ENCODE measurements at regions of chr11 and their contacts with region 1.

Region 1: GRCh38 chr11:45348729-45349128 is 62.6 kb upstream of the SYT13 start:
- DNase-seq: no peak
- ATAC-seq: no peak
- H3K4me3 ChIP-seq: no peak overlapping the region
- H3K27ac ChIP-seq: no peak overlapping the region
- H3K4me1 ChIP-seq: no peaks in the 10 kb centered on the region
- H3K27me3 ChIP-seq: peaks cover 54% of the 10 kb centered on the region
- CTCF ChIP-seq: no peak

Region 2: DNA sequence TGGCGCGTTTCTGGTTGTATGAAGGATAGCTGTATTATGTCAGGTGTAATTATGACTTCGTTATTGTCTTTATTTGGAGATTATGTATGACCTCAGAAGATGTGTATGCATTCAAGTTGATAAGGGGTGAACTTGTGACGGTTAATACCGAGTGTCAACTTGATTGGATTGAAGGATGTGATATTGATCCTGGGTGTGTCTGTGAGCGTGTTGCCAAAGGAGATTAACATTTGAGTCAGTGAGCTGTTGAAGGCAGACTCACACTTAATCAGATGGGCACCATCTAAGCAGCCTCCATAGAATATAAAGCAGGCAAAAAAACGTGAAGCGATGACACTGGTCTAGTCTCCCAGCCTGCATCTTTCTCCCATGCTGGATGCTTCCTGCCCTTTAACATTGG is 798.6 kb before region 1 on chr11:
- CTCF ChIA-PET with region 1: no interaction called
- POLR2A ChIA-PET with region 1: no interaction called
- intact Hi-C with region 1: no loop called
- DNase-seq: no peak
- ATAC-seq: no peak
- H3K4me3 ChIP-seq: no peak overlapping the region
- H3K27ac ChIP-seq: no peak overlapping the region
- H3K4me1 ChIP-seq: no peaks in the 10 kb centered on the region
- H3K27me3 ChIP-seq: no peaks in the 10 kb centered on the region
- CTCF ChIP-seq: no peak

Region 3: DNA sequence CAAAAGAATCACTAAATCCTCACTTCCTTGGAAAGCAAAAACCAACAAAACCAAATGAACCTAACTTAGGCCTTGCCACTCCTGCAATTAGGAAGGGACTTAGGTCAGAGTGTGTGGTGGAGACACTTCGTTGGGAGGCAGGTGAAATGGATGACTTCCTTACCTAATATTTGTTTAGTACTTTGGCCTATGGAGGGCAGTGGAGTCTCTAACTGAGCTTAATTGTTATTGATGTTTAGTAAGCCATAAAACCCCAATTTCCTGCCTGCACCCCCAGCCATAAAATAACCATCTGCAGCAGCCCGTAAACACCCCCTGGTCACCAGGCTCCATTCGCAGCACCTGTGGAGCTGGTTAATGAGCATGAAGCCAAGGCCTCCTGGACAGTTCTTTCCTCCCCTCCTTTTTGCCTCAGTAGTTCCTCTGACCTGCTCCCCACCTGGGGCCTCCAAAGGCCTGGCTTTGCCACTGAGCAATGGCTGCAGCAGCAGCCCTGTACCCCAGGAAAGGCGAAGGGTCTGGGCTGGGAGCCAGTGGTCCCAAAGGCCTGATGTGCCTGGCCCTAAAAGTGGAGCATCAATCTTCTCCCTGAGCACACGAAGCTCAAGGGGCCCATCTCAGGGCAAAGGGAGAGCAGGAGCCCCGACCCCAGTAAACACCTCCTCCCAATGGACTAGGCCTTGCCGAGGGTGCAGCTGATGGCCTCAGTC is 47.0 kb before region 1 on chr11:
- CTCF ChIA-PET with region 1: no interaction called
- POLR2A ChIA-PET with region 1: no interaction called
- intact Hi-C with region 1: no loop called
- DNase-seq: no peak
- ATAC-seq: no peak
- H3K4me3 ChIP-seq: no peak overlapping the region
- H3K27ac ChIP-seq: no peak overlapping the region
- H3K4me1 ChIP-seq: no peaks in the 10 kb centered on the region
- H3K27me3 ChIP-seq: peaks cover 45% of the 10 kb centered on the region
- CTCF ChIP-seq: no peak

Region 4: GRCh38 chr11:45655347-45655756 is 306.6 kb after region 1 on chr11:
- CTCF ChIA-PET with region 1: interaction called, 11 read pairs
- POLR2A ChIA-PET with region 1: no interaction called
- intact Hi-C with region 1: no loop called
- DNase-seq: peak; percentile 73
- ATAC-seq: peak; percentile 88
- H3K4me3 ChIP-seq: no peak overlapping the region
- H3K27ac ChIP-seq: no peak overlapping the region
- H3K4me1 ChIP-seq: no peaks in the 10 kb centered on the region
- H3K27me3 ChIP-seq: peaks cover 12% of the 10 kb centered on the region
- CTCF ChIP-seq: peak; percentile 83